Activated T-helper 2 cell treated with anti-CD3 and anti-CD28 coated beads, Interferon-gamma antibody, Interleukin-2, Interleukin-4, amounts not matched to agents 10 μg/mL and 5 μg/mL and 100 μg/mL, durations not matched to agents 14 hours and 24 hours and 36 hours (primary cell): ENCODE measurements at regions of chr7 and their contacts with region 1.

Region 1: GRCh38 chr7:54242776-54243175 is 299.4 kb upstream of the VSTM2A start:
- DNase-seq: no peak
- H3K4me3 Mint-ChIP-seq: no peak overlapping the region
- H3K27ac Mint-ChIP-seq: no peak overlapping the region
- H3K4me1 Mint-ChIP-seq: no peaks in the 10 kb centered on the region
- H3K27me3 Mint-ChIP-seq: no peaks in the 10 kb centered on the region

Region 2: GRCh38 chr7:54189330-54189729 is 53.4 kb before region 1 on chr7:
- intact Hi-C with region 1: no loop called
- DNase-seq: no peak
- H3K4me3 Mint-ChIP-seq: no peak overlapping the region
- H3K27ac Mint-ChIP-seq: no peak overlapping the region
- H3K4me1 Mint-ChIP-seq: no peaks in the 10 kb centered on the region
- H3K27me3 Mint-ChIP-seq: no peaks in the 10 kb centered on the region

Region 3: DNA sequence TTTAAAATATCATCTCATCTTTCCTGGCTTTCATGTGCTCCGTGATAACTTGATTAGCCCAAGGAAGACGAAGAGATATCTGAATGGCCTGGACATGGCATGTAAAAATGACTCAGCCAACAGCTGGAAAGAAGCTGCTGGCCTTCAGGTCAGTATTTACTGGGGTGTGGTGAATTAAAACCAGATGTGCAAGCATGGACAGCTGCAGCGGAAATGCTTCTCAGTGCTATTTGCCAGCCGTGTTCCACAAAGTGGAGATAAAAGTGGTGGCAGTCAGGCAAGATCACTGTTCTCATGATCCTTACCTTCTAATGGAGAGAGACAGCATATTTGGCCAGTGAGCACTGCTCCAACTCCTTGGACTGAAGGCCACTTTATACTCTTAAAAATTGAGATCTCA is 96.3 kb after region 1 on chr7:
- intact Hi-C with region 1: loop called (anchors 10 kb)
- DNase-seq: no peak
- H3K4me3 Mint-ChIP-seq: no peak overlapping the region
- H3K27ac Mint-ChIP-seq: no peak overlapping the region
- H3K4me1 Mint-ChIP-seq: no peaks in the 10 kb centered on the region
- H3K27me3 Mint-ChIP-seq: no peaks in the 10 kb centered on the region

Region 4: GRCh38 chr7:54678763-54679489 is 436.1 kb after region 1 on chr7:
- intact Hi-C with region 1: no loop called
- DNase-seq: no peak
- H3K4me3 Mint-ChIP-seq: no peak overlapping the region
- H3K27ac Mint-ChIP-seq: no peak overlapping the region
- H3K4me1 Mint-ChIP-seq: no peaks in the 10 kb centered on the region
- H3K27me3 Mint-ChIP-seq: no peaks in the 10 kb centered on the region